K562 (cell line): ENCODE measurements at regions of chr10 and their contacts with region 1.

Region 1: DNA sequence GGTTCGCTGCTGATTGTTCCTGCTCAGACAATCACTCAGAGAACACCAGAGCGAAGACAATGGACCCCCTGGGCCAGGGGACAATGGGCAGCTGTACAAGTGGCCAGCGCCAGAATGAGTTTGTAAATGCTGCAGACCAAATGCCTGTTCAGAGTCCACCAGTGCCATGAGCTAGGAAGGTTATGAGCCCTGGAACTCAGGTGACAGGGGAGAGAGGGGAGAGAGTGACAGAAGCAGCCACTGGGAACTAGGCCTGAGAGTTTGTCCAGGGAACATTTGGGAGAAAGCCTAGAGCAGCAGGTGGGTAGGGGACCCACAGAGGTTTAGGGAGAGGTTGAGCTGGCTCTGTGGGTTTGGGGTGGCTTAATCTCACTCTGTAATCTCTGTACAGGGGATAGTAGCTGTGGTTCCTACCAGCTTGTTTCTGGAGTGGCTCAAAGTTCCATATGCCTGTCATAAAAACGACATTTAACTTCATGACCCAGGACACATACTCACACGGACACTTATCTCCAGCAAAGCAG is 60.4 kb downstream of the C10orf105 start:
- DNase-seq: peak in 1 of 4 experiments; percentile 49
- ATAC-seq: peak; percentile 39
- H3K4me3 ChIP-seq: no peak overlapping the region
- H3K27ac ChIP-seq: peak overlapping the region; percentile 26
- H3K4me1 ChIP-seq: peaks cover 28 to 43% of the 10 kb centered on the region in 2 experiments
- H3K27me3 ChIP-seq: no peaks in the 10 kb centered on the region
- CTCF ChIP-seq: no peak
- EP300 ChIP-seq: no peak
- POLR2A ChIP-seq: no peak
- RAD21 ChIP-seq: no peak

Region 2: DNA sequence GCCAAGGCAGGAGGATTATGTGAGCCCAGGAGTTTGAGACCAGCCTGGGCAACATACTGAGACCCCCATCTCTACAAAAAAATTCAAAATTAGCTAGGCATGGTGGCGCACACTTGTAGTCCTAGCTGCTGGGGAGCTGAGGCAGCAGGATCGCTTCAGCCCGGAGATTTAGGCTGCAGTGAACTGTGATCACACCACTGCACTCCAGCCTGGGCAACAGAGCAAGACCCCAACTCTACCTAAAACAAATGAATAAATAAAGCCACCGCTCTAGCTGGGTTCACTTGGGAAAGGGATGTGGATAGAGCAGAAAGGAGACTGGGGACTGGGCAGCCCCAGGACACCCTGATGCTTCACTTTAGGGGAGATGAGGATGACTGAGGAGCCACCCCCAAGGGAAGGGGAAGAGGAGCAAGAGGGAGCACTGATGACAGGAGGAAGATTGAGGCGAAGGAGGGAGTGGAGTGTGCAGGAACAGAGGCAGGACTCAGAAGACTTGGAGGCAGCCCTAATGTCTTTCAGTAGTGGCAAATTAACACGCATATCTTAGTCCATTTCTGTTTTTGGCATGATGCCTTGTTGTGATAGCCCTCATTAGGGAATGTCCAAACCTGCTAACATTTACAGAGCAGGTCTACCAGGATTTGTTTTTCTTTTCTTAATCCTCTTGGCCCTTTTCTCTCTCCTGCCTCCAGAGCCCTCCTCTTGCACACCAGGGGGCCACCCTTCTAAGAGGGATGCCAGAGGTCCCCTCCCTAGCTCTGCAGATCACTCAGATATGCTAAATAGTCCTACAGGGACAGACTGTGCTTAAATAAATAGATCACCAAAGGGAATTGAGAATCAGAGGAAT is 27.9 kb before region 1 on chr10:
- CTCF ChIA-PET with region 1: no interaction called
- POLR2A ChIA-PET with region 1: no interaction called
- in situ Hi-C with region 1: no loop called
- intact Hi-C with region 1: no loop called
- DNase-seq: peak in 3 of 4 experiments; percentile 43 to 70 (median 70)
- ATAC-seq: peak; percentile 31; the same call in 2 of the 3 replicates
- H3K4me3 ChIP-seq: no peak overlapping the region
- H3K27ac ChIP-seq: peak overlapping the region; percentile 35; the same call in 2 of the 3 replicates
- H3K4me1 ChIP-seq: peaks cover 59 to 72% of the 10 kb centered on the region in 2 experiments
- H3K27me3 ChIP-seq: no peaks in the 10 kb centered on the region; a peak in 1 of 5 replicates
- CTCF ChIP-seq: peak in 1 of 3 experiments; percentile 32; a peak in 3 of 6 replicates
- EP300 ChIP-seq: no peak
- POLR2A ChIP-seq: no peak
- RAD21 ChIP-seq: no peak

Region 3: DNA sequence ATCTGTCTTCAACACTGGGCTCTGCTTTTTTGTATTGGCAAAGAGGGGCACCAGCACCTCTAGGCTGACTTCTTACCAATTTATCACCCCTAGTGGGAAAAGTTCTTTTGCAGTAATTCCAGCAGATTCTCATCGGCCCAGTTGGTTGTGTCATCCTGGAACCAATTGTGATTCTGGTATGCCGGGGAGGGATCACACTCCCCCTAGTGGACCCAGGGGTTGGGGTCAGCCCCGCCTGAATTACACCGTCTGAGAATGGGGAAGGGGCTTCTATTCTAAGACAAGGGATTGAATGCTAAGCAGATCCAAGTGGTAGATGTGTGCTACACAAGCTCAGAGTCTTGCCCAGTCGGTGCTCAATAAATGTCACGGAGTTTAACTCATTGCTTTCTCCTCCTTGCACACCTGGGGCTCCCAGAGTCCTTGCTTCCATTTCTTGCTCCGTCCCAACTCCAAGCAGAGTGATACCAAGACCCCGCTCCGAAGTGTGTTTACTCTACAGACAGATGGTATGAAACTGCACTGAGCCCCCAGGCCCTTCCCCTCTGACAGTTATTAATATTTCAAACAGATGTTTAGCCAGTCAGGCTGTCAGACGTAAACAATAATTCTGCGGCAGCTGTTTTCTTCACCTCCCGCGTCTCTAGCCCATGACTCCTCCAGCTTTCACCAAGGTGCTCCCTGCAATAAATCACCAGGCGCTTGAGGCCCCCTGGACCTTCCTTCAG is 11.5 kb before region 1 on chr10:
- CTCF ChIA-PET with region 1: interaction called, 3 read pairs
- POLR2A ChIA-PET with region 1: interaction called, 13 read pairs
- in situ Hi-C with region 1: no loop called
- intact Hi-C with region 1: no loop called
- DNase-seq: peak; percentile 72 to 88 (median 80)
- ATAC-seq: peak; percentile 79
- H3K4me3 ChIP-seq: no peak overlapping the region
- H3K27ac ChIP-seq: peak overlapping the region; percentile 78
- H3K4me1 ChIP-seq: peaks cover 39 to 62% of the 10 kb centered on the region in 2 experiments
- H3K27me3 ChIP-seq: no peaks in the 10 kb centered on the region
- CTCF ChIP-seq: peak; percentile 80 to 95 (median 90)
- EP300 ChIP-seq: peak; percentile 6; the same call in 1 of the 2 replicates
- POLR2A ChIP-seq: no peak
- RAD21 ChIP-seq: peak; percentile 43 to 86

Region 4: DNA sequence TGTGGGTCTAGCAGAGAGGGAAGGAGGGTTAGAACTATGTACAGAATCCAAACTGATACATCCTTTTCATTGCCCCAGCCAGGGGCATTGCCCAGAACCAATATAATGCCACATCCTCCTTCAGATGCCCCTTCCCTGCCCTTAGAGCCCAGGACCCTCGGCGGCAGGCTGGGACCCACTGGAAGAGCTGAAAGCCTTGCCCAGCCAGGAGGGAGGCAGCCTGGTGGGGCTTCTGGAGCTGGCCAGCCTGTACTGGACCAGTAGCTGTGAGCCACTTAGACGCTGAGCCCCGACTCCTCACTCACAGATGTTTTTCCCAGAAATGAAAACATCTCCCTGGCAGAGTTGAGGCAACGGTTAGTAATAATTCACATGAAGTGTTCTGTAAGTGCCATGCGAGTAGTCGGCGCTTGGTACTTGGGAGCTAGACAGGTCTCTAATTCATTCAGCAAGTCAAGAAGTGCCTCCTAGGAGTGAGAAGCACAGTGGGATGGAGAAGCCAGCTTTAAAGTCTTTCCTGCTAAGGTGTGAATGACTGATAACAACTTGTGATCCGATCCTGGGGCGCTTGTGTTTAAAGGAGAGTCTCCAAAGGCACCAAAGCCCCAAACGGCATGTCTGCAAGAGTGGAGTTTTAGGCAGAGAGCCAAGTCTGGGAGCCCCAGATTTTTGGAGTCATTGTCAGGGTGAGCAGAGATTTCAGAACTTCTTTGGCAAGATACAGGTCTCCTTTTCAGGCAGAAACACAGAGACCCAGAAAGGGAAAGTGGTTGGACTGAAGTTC is 104.4 kb after region 1 on chr10:
- CTCF ChIA-PET with region 1: no interaction called
- POLR2A ChIA-PET with region 1: no interaction called
- in situ Hi-C with region 1: no loop called
- intact Hi-C with region 1: no loop called
- DNase-seq: peak in 2 of 4 experiments; percentile 51 to 61
- ATAC-seq: peak; percentile 12; the same call in 1 of the 3 replicates
- H3K4me3 ChIP-seq: no peak overlapping the region
- H3K27ac ChIP-seq: no peak overlapping the region
- H3K4me1 ChIP-seq: peaks cover 19 to 33% of the 10 kb centered on the region in 2 experiments; a peak in 4 of 5 replicates
- H3K27me3 ChIP-seq: peaks cover 0 to 13% of the 10 kb centered on the region in 2 experiments; a peak in 2 of 5 replicates
- CTCF ChIP-seq: no peak
- EP300 ChIP-seq: no peak
- POLR2A ChIP-seq: no peak
- RAD21 ChIP-seq: no peak